PC-3 (cell line): ENCODE measurements at regions of chr1 and their contacts with region 1.

Region 1: GRCh38 chr1:27503797-27504587 is 14.0 kb upstream of the WASF2 start:
- DNase-seq: no peak
- ATAC-seq: no peak
- H3K4me3 ChIP-seq: no peak overlapping the region
- H3K27ac ChIP-seq: no peak overlapping the region
- H3K4me1 ChIP-seq: no peaks in the 10 kb centered on the region
- H3K27me3 ChIP-seq: no peaks in the 10 kb centered on the region
- CTCF ChIP-seq: no peak

Region 2: DNA sequence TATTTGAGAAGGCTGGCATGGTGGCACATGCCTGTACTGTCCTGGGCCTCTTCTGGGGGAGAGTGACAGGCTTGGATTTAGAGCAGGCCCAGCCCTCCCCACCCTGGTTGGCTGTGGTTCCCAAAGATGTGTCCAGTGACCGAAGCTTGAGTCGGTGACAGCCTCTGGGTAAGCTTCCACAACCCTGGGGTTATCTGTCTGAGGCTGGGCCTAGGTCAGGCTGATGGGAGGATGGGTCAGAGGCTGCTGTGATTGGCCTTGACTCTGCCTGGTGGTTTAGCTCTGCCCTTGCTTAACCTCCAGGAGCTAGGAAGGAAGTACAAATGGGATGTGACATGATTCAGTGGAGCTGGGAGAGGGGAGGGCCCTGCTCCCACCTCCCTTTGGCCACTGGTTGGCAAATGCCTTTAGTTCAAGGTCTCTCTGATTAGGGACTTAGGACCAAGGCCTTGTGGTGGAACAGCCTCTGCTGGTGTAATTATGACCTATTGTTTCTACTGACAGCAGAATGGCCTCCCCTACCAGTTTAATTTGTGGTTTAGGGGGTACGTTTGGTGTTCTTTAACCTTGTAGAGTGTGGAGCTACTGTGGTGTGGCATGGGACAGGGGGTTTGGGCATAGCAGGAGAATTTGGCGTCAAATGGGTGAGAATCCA is 565.9 kb before region 1 on chr1:
- CTCF ChIA-PET with region 1: no interaction called
- POLR2A ChIA-PET with region 1: no interaction called
- intact Hi-C with region 1: no loop called
- DNase-seq: no peak
- ATAC-seq: no peak
- H3K4me3 ChIP-seq: no peak overlapping the region
- H3K27ac ChIP-seq: no peak overlapping the region
- H3K4me1 ChIP-seq: no peaks in the 10 kb centered on the region
- H3K27me3 ChIP-seq: no peaks in the 10 kb centered on the region
- CTCF ChIP-seq: no peak

Region 3: DNA sequence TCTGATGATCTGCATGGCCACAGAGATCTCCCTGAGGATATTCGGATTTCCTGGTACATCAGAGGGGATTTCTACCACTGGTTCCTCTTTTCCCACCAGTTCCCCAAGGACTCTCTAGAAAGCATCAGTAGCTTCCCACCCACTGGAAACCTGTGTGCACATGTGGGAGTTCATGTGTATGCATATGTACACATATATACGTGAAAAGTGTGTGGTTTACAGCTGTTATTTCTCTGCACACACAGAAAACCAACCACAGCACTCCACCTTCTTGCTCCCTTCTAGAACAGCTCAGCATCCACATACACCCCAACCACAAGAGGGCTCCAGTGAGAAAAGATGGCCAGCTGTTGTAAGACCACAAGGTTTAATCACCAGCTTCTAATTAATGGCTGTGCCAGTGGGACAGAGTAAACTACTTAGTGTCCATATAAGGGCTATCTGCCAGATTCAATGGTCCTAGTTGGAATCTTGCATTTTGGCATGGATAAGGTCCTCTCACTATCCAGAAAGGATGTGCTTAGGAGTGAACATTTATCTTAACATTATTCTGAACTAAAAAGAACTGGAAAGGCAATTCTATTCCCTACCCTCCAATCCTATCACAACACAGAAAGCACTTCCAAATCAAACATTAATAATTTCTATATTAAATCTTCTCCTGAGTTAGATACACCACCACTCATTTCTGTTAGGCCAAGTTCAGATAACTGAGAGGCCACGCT is 87.4 kb before region 1 on chr1:
- CTCF ChIA-PET with region 1: no interaction called
- POLR2A ChIA-PET with region 1: interaction called, 13 read pairs
- intact Hi-C with region 1: no loop called
- DNase-seq: peak; percentile 70
- ATAC-seq: peak; percentile 54
- H3K4me3 ChIP-seq: no peak overlapping the region
- H3K27ac ChIP-seq: no peak overlapping the region
- H3K4me1 ChIP-seq: peaks cover 17% of the 10 kb centered on the region
- H3K27me3 ChIP-seq: no peaks in the 10 kb centered on the region
- CTCF ChIP-seq: peak; percentile 87